CD8-positive, alpha-beta T cell (primary cell): ENCODE measurements at regions of chr2 and their contacts with region 1.

Region 1: DNA sequence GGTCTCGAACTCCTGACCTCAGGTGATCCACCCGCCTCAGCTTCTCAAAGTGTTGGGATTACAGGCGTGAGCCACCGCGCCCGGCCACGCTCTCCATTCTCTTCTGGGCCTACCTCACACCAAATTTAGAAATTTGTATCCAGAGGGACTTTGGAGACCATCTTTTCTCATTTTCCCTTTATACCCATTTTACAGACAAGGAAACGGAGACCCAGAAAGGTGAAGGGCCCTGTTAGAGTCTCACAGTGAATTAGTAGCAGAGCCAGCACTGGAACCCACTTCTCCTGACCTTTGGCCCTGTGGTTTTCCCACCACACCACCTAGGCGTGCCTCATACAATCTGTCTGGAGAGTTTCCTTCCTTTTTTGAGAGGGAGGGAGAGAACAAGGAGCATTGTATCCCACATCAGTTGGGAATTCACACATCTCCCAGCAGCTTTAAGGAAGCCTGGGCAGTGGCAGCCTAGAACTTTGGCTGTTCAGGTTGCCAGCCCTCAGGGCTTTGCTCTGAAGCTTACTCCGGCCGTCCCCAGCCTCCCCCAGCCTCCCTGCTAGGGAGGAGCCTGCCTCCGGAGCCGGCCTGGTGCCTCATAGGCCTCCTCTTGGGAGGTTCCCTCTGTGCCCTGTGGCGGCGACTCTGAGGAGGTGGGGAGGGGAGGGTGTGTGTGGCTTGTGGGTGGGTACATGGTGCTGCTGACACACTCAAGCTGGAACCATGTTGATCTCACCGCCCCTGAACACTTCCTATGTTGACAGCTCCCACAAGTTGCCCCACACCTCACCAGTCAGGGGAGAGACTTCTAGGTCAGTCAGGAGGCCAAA is 13.8 kb downstream of the FOSL2 start:
- DNase-seq: peak; percentile 47 to 93 (median 76)
- ATAC-seq: peak; percentile 60
- H3K4me3 ChIP-seq: no peak overlapping the region
- H3K4me3 Mint-ChIP-seq: peak overlapping the region; percentile 44
- H3K27ac ChIP-seq: peak overlapping the region; percentile 28 to 96
- H3K27ac Mint-ChIP-seq: peak overlapping the region; percentile 91
- H3K4me1 ChIP-seq: peaks cover 75% of the 10 kb centered on the region
- H3K4me1 Mint-ChIP-seq: peaks cover 76% of the 10 kb centered on the region
- H3K27me3 ChIP-seq: no peaks in the 10 kb centered on the region
- H3K27me3 Mint-ChIP-seq: no peaks in the 10 kb centered on the region
- CTCF ChIP-seq: no peak

Region 2: DNA sequence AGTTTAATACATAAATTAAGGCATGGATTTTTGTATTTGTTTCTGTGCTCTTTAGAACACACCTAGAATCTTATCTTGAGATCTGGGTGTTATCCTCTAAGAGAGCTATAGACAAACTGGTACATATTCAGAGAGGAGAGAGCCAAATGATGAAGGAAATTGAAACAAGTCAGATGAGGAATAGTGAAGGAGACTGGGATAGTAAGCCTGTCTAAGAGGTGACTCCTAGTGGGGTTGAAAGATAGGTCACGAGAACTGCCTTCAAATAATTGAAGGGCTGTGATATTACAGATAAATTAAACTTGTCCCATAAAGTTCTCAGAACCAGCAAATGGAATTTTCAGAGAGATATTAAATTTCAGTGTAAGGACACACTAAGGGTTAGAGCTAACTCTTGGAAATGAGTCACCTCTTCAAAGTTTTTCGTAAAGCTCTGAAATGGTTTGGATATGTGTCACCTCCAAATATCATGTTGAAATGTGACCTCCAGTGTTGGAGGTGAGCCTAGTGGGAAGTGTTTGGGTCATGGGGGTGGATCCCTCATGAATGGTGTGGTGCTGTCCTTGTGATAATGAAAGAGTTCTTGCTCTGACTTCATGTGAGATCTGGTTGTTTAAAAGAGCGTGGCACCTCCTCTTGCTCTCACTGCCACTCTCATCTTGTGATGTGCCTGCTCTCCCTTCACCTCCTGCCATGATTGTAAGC is 428.7 kb before region 1 on chr2:
- CTCF ChIA-PET with region 1: no interaction called
- POLR2A ChIA-PET with region 1: no interaction called
- intact Hi-C with region 1: no loop called
- DNase-seq: no peak
- ATAC-seq: no peak
- H3K4me3 ChIP-seq: no peak overlapping the region
- H3K4me3 Mint-ChIP-seq: no peak overlapping the region
- H3K27ac ChIP-seq: no peak overlapping the region
- H3K27ac Mint-ChIP-seq: peak overlapping the region; percentile 46
- H3K4me1 ChIP-seq: peaks cover 3% of the 10 kb centered on the region
- H3K4me1 Mint-ChIP-seq: peaks cover 11% of the 10 kb centered on the region
- H3K27me3 ChIP-seq: no peaks in the 10 kb centered on the region
- H3K27me3 Mint-ChIP-seq: no peaks in the 10 kb centered on the region
- CTCF ChIP-seq: no peak

Region 3: DNA sequence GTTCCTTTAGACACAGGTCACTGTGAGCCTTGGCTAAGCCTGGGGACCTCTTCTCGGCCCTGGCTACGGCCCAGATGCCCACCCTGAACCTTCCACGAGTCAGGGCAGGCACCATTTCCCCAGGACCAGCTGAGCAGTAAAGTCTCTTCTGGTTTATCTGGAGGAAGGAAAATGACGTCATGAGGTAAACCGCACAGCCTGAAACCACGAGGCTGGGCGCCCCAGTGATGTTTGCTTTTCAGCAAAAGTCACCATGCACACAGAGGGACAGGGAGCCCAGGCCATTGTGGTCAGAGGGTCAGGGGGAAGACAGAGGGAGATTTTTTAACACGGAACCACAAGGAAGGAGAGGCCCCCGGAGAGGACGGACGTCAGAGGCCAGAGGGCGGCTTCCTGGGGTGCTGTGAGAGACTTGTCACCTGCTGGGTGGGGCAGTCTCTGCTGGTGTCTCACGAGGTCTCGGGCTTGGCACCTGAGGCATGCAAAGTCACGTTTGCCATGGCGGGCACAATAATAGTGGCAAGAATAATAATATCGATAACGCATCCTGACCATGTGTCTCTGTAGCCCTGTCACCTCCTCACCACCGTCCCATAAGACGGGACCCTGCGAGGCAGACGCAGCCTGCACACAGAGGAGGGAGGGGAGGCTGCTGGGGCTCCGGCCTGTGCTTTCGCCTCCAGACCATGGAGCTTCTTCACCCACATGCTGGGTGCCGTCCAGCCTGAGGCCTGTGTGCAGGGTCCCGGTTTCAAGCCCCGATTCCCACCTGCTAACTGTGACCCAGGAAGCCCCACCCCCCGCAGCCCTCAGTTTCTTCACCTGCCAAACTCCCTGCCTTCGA is 47.0 kb before region 1 on chr2:
- CTCF ChIA-PET with region 1: no interaction called
- POLR2A ChIA-PET with region 1: interaction called, 3 read pairs
- intact Hi-C with region 1: loop called in 1 of 2 experiments (anchors 1 kb)
- DNase-seq: peak; percentile 69 to 94 (median 81)
- ATAC-seq: peak; percentile 82
- H3K4me3 ChIP-seq: peak overlapping the region; percentile 23 to 25
- H3K4me3 Mint-ChIP-seq: peak overlapping the region; percentile 76
- H3K27ac ChIP-seq: peak overlapping the region; percentile 21 to 94
- H3K27ac Mint-ChIP-seq: peak overlapping the region; percentile 93
- H3K4me1 ChIP-seq: peaks cover 49% of the 10 kb centered on the region
- H3K4me1 Mint-ChIP-seq: peaks cover 42% of the 10 kb centered on the region
- H3K27me3 ChIP-seq: no peaks in the 10 kb centered on the region
- H3K27me3 Mint-ChIP-seq: peaks cover 4% of the 10 kb centered on the region
- CTCF ChIP-seq: no peak

Region 4: DNA sequence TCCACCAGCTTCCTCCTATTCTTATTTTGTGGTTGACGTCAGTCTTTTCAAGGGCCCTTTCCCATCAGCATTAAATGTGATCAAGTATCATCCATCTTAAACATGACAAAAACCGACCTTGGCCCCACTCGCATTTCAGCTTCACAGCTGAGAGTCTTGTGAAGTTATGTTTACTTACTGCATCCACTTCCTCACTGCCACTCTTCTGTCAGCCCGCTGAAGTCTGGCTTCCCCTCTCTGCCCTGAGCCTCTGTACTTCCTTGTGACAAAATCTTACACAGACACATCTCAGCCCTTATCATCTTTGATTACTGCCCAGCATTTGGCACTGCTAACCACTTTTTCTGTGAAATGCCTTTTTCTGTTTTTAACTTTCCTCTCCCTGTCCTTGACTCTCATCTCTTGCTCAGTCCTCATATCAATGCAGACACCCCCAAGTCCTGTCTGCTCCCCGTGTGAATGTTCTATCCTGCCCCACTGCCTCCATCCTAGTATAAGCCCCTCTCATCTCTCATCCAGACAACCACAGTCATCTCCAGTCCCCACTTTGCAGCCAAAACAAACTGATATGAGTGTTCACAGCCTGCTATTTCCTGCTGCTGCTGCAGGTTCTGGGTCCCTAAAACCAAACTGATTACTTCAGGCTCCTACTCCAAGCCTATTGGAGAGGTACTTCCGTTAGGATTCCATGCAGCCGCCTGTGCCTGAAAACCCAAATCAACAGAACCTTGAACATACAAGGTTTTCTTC is 17.5 kb after region 1 on chr2:
- CTCF ChIA-PET with region 1: interaction called, 4 read pairs
- POLR2A ChIA-PET with region 1: interaction called, 4 read pairs
- intact Hi-C with region 1: loop called in 1 of 2 experiments (anchors 1 kb)
- DNase-seq: peak in 8 of 9 experiments; percentile 45 to 82 (median 66)
- ATAC-seq: peak; percentile 82
- H3K4me3 ChIP-seq: peak overlapping the region; percentile 18 to 38
- H3K4me3 Mint-ChIP-seq: peak overlapping the region; percentile 80
- H3K27ac ChIP-seq: peak overlapping the region; percentile 63 to 91
- H3K27ac Mint-ChIP-seq: peak overlapping the region; percentile 98
- H3K4me1 ChIP-seq: peaks cover 32% of the 10 kb centered on the region
- H3K4me1 Mint-ChIP-seq: peaks cover 41% of the 10 kb centered on the region
- H3K27me3 ChIP-seq: no peaks in the 10 kb centered on the region
- H3K27me3 Mint-ChIP-seq: no peaks in the 10 kb centered on the region
- CTCF ChIP-seq: no peak

Region 5: DNA sequence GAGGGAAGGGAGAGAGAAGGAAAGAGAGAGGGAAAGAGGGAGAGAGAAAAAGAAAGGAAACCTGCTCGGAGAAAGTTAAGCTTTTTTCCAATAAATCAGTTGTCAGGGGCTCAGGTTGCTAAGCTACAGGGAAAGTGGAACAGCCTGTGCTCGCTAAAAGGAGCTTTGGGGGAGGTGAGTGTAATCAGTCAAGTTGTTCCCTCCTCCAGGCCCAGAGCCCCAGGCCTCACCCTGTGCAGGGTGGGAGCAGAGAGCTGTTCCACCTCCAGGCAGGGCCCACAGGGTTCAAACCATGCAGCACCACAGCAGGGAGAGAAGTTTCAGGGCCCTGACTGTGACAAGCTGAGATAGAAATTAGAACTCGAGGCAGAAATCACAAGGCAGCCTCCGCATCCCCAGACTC is 288.8 kb after region 1 on chr2:
- CTCF ChIA-PET with region 1: no interaction called
- POLR2A ChIA-PET with region 1: no interaction called
- intact Hi-C with region 1: no loop called
- DNase-seq: no peak
- ATAC-seq: no peak
- H3K4me3 ChIP-seq: no peak overlapping the region
- H3K4me3 Mint-ChIP-seq: no peak overlapping the region
- H3K27ac ChIP-seq: no peak overlapping the region
- H3K27ac Mint-ChIP-seq: no peak overlapping the region
- H3K4me1 ChIP-seq: no peaks in the 10 kb centered on the region
- H3K4me1 Mint-ChIP-seq: no peaks in the 10 kb centered on the region
- H3K27me3 ChIP-seq: no peaks in the 10 kb centered on the region
- H3K27me3 Mint-ChIP-seq: no peaks in the 10 kb centered on the region
- CTCF ChIP-seq: no peak